CD4-positive, alpha-beta T cell (primary cell): ENCODE measurements at regions of chr9 and their contacts with region 1.

Region 1: GRCh38 chr9:77977210-77977611 is 54.4 kb downstream of the GNAQ start:
- DNase-seq: peak; percentile 9 to 79 (median 43)
- ATAC-seq: peak; percentile 65
- H3K4me3 ChIP-seq: no peak overlapping the region
- H3K4me3 Mint-ChIP-seq: peak overlapping the region; percentile 54
- H3K27ac ChIP-seq: no peak overlapping the region
- H3K27ac Mint-ChIP-seq: peak overlapping the region; percentile 40
- H3K4me1 ChIP-seq: peaks cover 37% of the 10 kb centered on the region
- H3K4me1 Mint-ChIP-seq: peaks cover 69% of the 10 kb centered on the region
- H3K27me3 ChIP-seq: no peaks in the 10 kb centered on the region
- H3K27me3 Mint-ChIP-seq: no peaks in the 10 kb centered on the region
- CTCF ChIP-seq: peak; percentile 44

Region 2: DNA sequence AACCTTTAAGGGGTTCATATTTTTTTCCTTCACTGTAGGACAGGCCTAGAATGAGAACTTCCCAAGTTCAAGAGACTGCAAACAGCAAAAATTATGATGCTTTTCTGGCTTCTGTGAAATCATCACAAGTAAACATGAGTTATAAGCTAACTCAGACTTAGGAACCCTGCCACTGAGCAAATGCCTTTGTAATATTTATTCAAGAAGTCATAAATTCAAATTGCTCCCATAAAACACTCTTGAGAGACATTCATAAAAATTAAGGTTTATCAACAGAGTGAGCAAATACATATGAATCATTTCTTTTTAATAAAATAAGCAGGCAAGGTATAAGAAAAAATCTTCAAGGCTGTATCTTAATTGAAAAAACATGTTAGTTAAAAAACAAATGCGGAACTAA is 453.3 kb before region 1 on chr9:
- CTCF ChIA-PET with region 1: no interaction called
- POLR2A ChIA-PET with region 1: no interaction called
- intact Hi-C with region 1: no loop called
- DNase-seq: no peak
- ATAC-seq: no peak
- H3K4me3 ChIP-seq: no peak overlapping the region
- H3K4me3 Mint-ChIP-seq: no peak overlapping the region
- H3K27ac ChIP-seq: no peak overlapping the region
- H3K27ac Mint-ChIP-seq: no peak overlapping the region
- H3K4me1 ChIP-seq: no peaks in the 10 kb centered on the region
- H3K4me1 Mint-ChIP-seq: no peaks in the 10 kb centered on the region
- H3K27me3 ChIP-seq: no peaks in the 10 kb centered on the region
- H3K27me3 Mint-ChIP-seq: peaks cover 4% of the 10 kb centered on the region
- CTCF ChIP-seq: no peak

Region 3: GRCh38 chr9:77899679-77900354 is 77.4 kb before region 1 on chr9:
- CTCF ChIA-PET with region 1: no interaction called
- POLR2A ChIA-PET with region 1: no interaction called
- intact Hi-C with region 1: loop called in 1 of 2 experiments (anchors 10 kb)
- DNase-seq: no peak
- ATAC-seq: no peak
- H3K4me3 ChIP-seq: no peak overlapping the region
- H3K4me3 Mint-ChIP-seq: no peak overlapping the region
- H3K27ac ChIP-seq: no peak overlapping the region
- H3K27ac Mint-ChIP-seq: no peak overlapping the region
- H3K4me1 ChIP-seq: no peaks in the 10 kb centered on the region
- H3K4me1 Mint-ChIP-seq: peaks cover 43% of the 10 kb centered on the region
- H3K27me3 ChIP-seq: no peaks in the 10 kb centered on the region
- H3K27me3 Mint-ChIP-seq: no peaks in the 10 kb centered on the region
- CTCF ChIP-seq: no peak